CD4-positive, alpha-beta memory T cell (primary cell): ENCODE measurements at regions of chr20 and their contacts with region 1.

Region 1: GRCh38 chr20:5109276-5109675 is 10.5 kb downstream of the PCNA start:
- DNase-seq: no peak
- H3K4me3 ChIP-seq: no peak overlapping the region
- H3K4me3 Mint-ChIP-seq: no peak overlapping the region
- H3K27ac ChIP-seq: no peak overlapping the region
- H3K27ac Mint-ChIP-seq: peak overlapping the region in 5 of 7 donors; percentile 17 to 57 (median 21)
- H3K4me1 ChIP-seq: peaks cover 19% of the 10 kb centered on the region
- H3K4me1 Mint-ChIP-seq: peaks cover 12 to 29% (median 16%) of the 10 kb centered on the region in 4 donors
- H3K27me3 ChIP-seq: no peaks in the 10 kb centered on the region
- H3K27me3 Mint-ChIP-seq: no peaks in the 10 kb centered on the region

Region 2: GRCh38 chr20:4989570-4989969 is 119.7 kb before region 1 on chr20:
- CTCF ChIA-PET with region 1: no interaction called
- POLR2A ChIA-PET with region 1: no interaction called
- intact Hi-C with region 1: no loop called
- DNase-seq: no peak
- H3K4me3 ChIP-seq: no peak overlapping the region
- H3K4me3 Mint-ChIP-seq: no peak overlapping the region
- H3K27ac ChIP-seq: no peak overlapping the region
- H3K27ac Mint-ChIP-seq: peak overlapping the region in 2 of 7 donors; percentile 5 to 65
- H3K4me1 ChIP-seq: peaks cover 3% of the 10 kb centered on the region
- H3K4me1 Mint-ChIP-seq: peaks cover 14 to 34% (median 22%) of the 10 kb centered on the region in 4 donors
- H3K27me3 ChIP-seq: no peaks in the 10 kb centered on the region
- H3K27me3 Mint-ChIP-seq: no peaks in the 10 kb centered on the region

Region 3: DNA sequence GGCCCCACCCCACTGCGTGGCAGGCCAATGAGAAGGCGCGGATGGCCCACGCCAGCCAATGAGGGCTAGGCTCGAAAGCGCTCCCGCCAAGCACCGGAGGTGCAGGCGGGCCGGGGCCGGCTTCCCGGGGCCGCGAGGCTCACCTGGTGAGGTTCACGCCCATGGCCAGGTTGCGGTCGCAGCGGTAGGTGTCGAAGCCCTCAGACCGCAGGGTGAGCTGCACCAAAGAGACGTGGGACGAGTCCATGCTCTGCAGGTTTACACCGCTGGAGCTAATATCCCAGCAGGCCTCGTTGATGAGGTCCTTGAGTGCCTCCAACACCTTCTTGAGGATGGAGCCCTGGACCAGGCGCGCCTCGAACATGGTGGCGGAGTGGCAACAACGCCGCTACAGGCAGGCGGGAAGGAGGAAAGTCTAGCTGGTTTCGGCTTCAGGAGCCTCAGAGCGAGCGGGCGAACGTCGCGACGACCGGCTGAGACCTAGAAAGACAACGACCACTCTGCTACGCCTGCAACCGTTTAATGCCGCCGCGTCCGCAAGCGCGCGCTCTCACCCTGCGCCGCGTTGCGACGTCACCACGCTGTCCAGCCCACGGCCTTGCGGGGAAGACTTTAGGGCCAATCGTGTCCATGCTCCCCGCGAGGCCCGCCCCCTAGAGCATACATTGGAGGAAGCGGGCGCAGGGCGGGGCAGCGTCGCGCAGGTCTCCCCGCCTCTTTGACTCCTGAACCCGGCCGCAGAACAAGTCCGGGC is 10.3 kb after region 1 on chr20 and contains the start of gene PCNA:
- CTCF ChIA-PET with region 1: interaction called, 5 read pairs
- POLR2A ChIA-PET with region 1: interaction called, 10 read pairs
- intact Hi-C with region 1: no loop called
- DNase-seq: peak; percentile 92 to 96 (median 94)
- H3K4me3 ChIP-seq: peak within 1 kb of the TSS; percentile 83 to 89
- H3K4me3 Mint-ChIP-seq: peak within 1 kb of the TSS; percentile 92 to 97 (median 95)
- H3K27ac ChIP-seq: peak within 1 kb of the TSS; percentile 72
- H3K27ac Mint-ChIP-seq: peak within 1 kb of the TSS; percentile 93 to 98 (median 96)
- H3K4me1 ChIP-seq: peaks cover 29% of the 10 kb centered on the region
- H3K4me1 Mint-ChIP-seq: peaks cover 13 to 42% (median 29%) of the 10 kb centered on the region in 4 donors
- H3K27me3 ChIP-seq: no peaks in the 10 kb centered on the region
- H3K27me3 Mint-ChIP-seq: no peaks in the 10 kb centered on the region
- total RNA-seq, gene PCNA: 60.0 to 60.5 TPM

Region 4: DNA sequence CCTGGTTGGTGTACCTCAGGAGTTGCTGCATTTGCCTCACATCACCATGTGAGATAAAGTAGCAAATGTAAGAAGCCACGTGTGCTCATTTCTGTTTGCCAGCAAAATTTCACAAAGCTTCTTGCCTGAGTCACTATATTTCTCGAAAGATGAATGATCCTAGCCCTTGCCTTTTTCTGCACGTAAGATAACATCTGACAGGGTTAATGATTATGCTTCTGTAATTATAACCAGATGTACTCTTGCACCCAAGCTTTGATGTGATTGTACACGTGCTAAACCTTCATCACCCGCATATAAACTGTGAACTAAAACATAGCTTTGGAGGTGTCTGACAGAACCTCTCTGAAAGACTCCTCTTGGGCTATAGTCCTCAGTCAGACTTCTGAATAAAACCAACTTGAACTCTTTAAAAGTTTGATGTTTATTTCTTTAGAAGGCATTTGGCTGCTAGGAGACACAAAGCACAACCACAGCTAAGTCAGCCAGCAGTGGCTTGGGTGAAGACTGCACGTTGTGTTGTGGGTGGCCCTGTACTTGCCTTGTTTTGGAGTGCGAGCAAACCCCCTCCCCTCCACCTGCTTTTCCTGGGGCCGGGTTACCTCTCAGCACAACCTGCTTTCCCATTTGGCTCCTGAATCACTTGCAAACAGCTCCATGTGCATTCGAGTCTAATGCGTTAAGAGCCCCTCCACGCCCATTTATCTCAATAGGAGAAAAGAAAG is 188.2 kb after region 1 on chr20:
- CTCF ChIA-PET with region 1: no interaction called
- POLR2A ChIA-PET with region 1: no interaction called
- intact Hi-C with region 1: no loop called
- DNase-seq: no peak
- H3K4me3 ChIP-seq: no peak overlapping the region
- H3K4me3 Mint-ChIP-seq: no peak overlapping the region
- H3K27ac ChIP-seq: no peak overlapping the region
- H3K27ac Mint-ChIP-seq: no peak overlapping the region
- H3K4me1 ChIP-seq: no peaks in the 10 kb centered on the region
- H3K4me1 Mint-ChIP-seq: peaks cover 0 to 7% (median 0%) of the 10 kb centered on the region in 4 donors
- H3K27me3 ChIP-seq: no peaks in the 10 kb centered on the region
- H3K27me3 Mint-ChIP-seq: peaks cover 12 to 21% of the 10 kb centered on the region in 2 donors